Mucosa of descending colon (tissue), 3 donors: ENCODE measurements at regions of chr15 and their contacts with region 1.

Region 1: DNA sequence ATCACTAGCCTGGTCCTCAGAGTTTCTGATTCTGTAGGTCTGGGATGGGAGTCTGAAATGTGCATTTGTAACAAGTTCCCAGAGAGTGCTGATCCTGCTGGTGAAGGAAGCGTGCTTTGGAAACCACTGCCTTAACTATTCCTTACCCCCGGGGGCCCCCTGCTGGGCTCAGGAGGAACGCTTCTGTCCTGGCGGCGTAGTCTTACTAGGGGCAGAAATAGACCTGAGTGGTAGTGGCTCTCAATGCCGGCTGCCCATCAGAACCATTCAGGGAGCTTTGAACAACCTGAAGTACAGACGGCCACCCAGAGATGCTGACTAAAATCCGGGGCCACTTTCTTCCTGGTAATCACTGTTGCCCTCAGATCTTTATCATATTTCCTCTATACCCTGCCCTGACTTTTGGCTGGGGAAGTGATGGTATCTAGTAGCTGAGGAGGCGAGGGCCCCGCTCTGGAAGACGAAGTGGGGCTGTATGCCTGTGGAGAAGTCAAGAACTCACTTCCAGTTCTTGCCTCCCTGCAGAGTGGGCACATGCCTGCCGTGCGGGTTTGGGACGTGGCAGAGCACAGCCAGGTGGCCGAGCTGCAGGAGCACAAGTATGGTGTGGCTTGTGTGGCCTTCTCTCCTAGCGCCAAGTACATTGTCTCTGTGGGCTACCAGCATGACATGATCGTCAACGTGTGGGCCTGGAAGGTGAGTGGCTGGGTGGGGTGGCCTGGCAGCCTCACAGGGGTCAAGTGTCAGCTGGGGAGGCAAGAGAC is 16.3 kb upstream of the JMJD7 start:
- DNase-seq: peak; percentile 76 to 91 (median 88)
- ATAC-seq: peak; percentile 96
- H3K4me3 ChIP-seq: no peak overlapping the region
- H3K4me1 ChIP-seq: no peaks in the 10 kb centered on the region
- CTCF ChIP-seq: peak; percentile 78

Region 2: GRCh38 chr15:41557673-41558399 is 253.8 kb before region 1 on chr15:
- intact Hi-C with region 1: loop called in 1 of 2 experiments (anchors 5 kb)
- DNase-seq: peak; percentile 57 to 66 (median 64)
- ATAC-seq: peak; percentile 71
- H3K4me3 ChIP-seq: no peak overlapping the region
- H3K4me1 ChIP-seq: peaks cover 10% of the 10 kb centered on the region
- CTCF ChIP-seq: peak; percentile 57

Region 3: DNA sequence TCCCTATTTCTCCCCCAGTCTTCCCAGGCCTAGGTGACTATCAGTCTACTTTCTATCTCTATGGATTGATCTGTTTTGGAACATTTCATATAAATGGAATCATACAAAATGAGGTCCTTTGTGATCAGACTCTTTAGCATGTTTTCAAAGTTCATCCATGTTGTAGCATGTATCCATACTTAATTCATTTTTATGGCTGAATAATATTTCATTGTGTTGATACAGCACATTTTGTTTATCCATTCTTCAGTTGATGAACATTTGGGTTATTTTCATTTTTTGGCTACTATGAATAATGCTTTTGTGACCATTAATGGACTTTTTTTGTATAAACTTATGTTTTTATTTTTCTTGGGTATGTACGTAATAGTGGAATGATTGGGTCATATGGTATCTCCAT is 170.6 kb before region 1 on chr15:
- intact Hi-C with region 1: no loop called
- DNase-seq: no peak
- ATAC-seq: no peak
- H3K4me3 ChIP-seq: no peak overlapping the region
- H3K4me1 ChIP-seq: no peaks in the 10 kb centered on the region
- CTCF ChIP-seq: no peak

Region 4: GRCh38 chr15:41774062-41774881 is 37.3 kb before region 1 on chr15 and contains the start of gene MAPKBP1:
- intact Hi-C with region 1: loop called (anchors 5 kb)
- DNase-seq: peak; percentile 99
- ATAC-seq: peak; percentile 97
- H3K4me3 ChIP-seq: peak within 1 kb of the TSS; percentile 49
- H3K4me1 ChIP-seq: peaks cover 14% of the 10 kb centered on the region
- CTCF ChIP-seq: peak; percentile 76
- total RNA-seq, gene MAPKBP1: 15.2 to 35.5 (median 16.0) TPM